ENCODE measurements at regions of chr10 and their contacts with region 1.

Region 1: GRCh38 chr10:119445311-119445934 is 97.1 kb downstream of the RGS10 start:
- DNase-seq: peak; percentile 89
- CTCF ChIP-seq: peak; percentile 96

Region 2: GRCh38 chr10:119149723-119150122 is 295.7 kb before region 1 on chr10:
- CTCF ChIA-PET with region 1: no interaction called
- POLR2A ChIA-PET with region 1: no interaction called
- DNase-seq: no peak
- CTCF ChIP-seq: no peak

Region 3: GRCh38 chr10:119416855-119417254 is 28.6 kb before region 1 on chr10:
- CTCF ChIA-PET with region 1: interaction called, 34 read pairs
- POLR2A ChIA-PET with region 1: no interaction called
- DNase-seq: peak; percentile 91
- CTCF ChIP-seq: peak; percentile 80

Region 4: GRCh38 chr10:119431034-119431767 is 14.2 kb before region 1 on chr10:
- CTCF ChIA-PET with region 1: interaction called, 41 read pairs
- POLR2A ChIA-PET with region 1: no interaction called
- DNase-seq: no peak
- CTCF ChIP-seq: no peak

Region 5: DNA sequence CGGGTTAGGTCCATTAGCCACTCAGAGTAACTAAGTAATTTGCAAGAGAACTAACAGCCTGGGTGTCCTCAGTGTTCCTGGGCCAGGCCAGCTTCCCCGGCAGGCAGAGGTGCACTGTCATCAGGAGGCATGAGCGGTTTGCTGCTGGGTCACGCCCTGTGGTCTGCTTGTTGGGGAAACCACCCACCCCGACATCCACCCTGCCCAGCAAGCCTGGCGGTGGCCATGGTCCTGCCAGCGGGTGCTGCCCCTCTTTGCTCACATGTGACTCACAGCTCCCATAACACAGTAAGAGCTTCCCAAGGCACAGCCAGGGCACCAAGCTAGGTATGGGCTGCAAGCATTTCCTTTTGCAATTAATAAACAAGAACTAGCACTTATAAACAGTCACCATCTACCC is 21.2 kb after region 1 on chr10:
- CTCF ChIA-PET with region 1: interaction called, 10 read pairs
- POLR2A ChIA-PET with region 1: no interaction called
- DNase-seq: peak; percentile 59
- CTCF ChIP-seq: no peak